Naive thymus-derived CD4-positive, alpha-beta T cell (primary cell): ENCODE measurements at regions of chr4 and their contacts with region 1.

Region 1: GRCh38 chr4:67624939-67625338 is 66.4 kb downstream of the STAP1 start:
- DNase-seq: peak in 2 of 9 donors; percentile 6 to 8
- ATAC-seq: no peak
- H3K4me3 ChIP-seq: no peak overlapping the region
- H3K4me3 Mint-ChIP-seq: no peak overlapping the region
- H3K27ac ChIP-seq: no peak overlapping the region
- H3K27ac Mint-ChIP-seq: no peak overlapping the region
- H3K4me1 ChIP-seq: no peaks in the 10 kb centered on the region
- H3K4me1 Mint-ChIP-seq: no peaks in the 10 kb centered on the region
- H3K27me3 ChIP-seq: no peaks in the 10 kb centered on the region
- H3K27me3 Mint-ChIP-seq: no peaks in the 10 kb centered on the region

Region 2: GRCh38 chr4:67575232-67575888 is 49.6 kb before region 1 on chr4:
- CTCF ChIA-PET with region 1: interaction called, 6 read pairs
- POLR2A ChIA-PET with region 1: interaction called, 3 read pairs
- intact Hi-C with region 1: loop called in 1 of 2 experiments (anchors 1 kb)
- DNase-seq: peak in 7 of 9 donors; percentile 29 to 63 (median 42)
- ATAC-seq: peak; percentile 86
- H3K4me3 ChIP-seq: peak overlapping the region; percentile 22
- H3K4me3 Mint-ChIP-seq: peak overlapping the region; percentile 58 to 82 (median 74)
- H3K27ac ChIP-seq: peak overlapping the region; percentile 70
- H3K27ac Mint-ChIP-seq: peak overlapping the region; percentile 79 to 95 (median 90)
- H3K4me1 ChIP-seq: peaks cover 0 to 33% of the 10 kb centered on the region in 2 donors
- H3K4me1 Mint-ChIP-seq: peaks cover 36 to 85% (median 68%) of the 10 kb centered on the region in 7 donors
- H3K27me3 ChIP-seq: no peaks in the 10 kb centered on the region
- H3K27me3 Mint-ChIP-seq: no peaks in the 10 kb centered on the region

Region 3: DNA sequence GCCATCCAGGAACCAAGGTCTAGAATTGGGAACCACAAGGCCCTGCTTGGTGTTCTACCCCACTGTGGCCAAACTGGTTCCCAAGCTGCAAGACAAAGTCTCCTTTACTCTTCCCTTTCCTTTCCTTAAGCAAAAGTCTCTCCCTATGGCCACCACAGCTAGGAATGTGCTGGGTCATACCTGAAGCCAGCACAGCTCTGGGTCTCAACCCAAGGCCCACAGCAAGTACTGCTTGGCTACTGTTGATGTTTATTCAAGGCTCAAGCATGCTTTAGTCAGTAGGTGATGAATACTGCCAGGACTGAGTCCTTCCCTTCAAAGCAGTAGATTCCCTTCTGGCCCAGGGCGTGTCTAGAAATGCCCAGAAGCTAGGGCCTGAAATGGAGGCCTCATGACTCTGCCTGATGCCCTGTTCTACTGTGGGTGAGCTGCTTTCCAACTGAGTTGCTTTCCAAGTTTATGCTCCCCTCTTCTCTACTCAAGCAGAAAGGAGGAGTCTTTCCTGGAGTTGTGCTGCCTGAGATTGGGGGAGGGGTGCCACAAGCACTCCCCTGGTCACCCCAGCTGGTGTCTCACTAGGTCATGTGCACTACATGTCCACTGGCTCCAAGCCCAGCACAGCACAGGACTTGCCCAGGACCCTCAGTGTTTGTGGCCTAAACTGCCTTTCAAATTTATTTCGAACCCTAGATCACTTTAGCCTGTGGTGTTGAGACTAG is 21.5 kb before region 1 on chr4:
- CTCF ChIA-PET with region 1: no interaction called
- POLR2A ChIA-PET with region 1: no interaction called
- intact Hi-C with region 1: loop called in 1 of 2 experiments (anchors 2 kb)
- DNase-seq: no peak
- ATAC-seq: no peak
- H3K4me3 ChIP-seq: no peak overlapping the region
- H3K4me3 Mint-ChIP-seq: no peak overlapping the region
- H3K27ac ChIP-seq: no peak overlapping the region
- H3K27ac Mint-ChIP-seq: peak overlapping the region in 1 of 9 donors; percentile 9
- H3K4me1 ChIP-seq: no peaks in the 10 kb centered on the region
- H3K4me1 Mint-ChIP-seq: peaks cover 0 to 6% (median 0%) of the 10 kb centered on the region in 7 donors
- H3K27me3 ChIP-seq: no peaks in the 10 kb centered on the region
- H3K27me3 Mint-ChIP-seq: no peaks in the 10 kb centered on the region

Region 4: GRCh38 chr4:67687636-67688035 is 62.7 kb after region 1 on chr4:
- CTCF ChIA-PET with region 1: no interaction called
- POLR2A ChIA-PET with region 1: no interaction called
- intact Hi-C with region 1: no loop called
- DNase-seq: no peak
- ATAC-seq: no peak
- H3K4me3 ChIP-seq: no peak overlapping the region
- H3K4me3 Mint-ChIP-seq: no peak overlapping the region
- H3K27ac ChIP-seq: no peak overlapping the region
- H3K27ac Mint-ChIP-seq: peak overlapping the region in 1 of 9 donors; percentile 19
- H3K4me1 ChIP-seq: no peaks in the 10 kb centered on the region
- H3K4me1 Mint-ChIP-seq: peaks cover 13 to 59% (median 48%) of the 10 kb centered on the region in 7 donors
- H3K27me3 ChIP-seq: no peaks in the 10 kb centered on the region
- H3K27me3 Mint-ChIP-seq: no peaks in the 10 kb centered on the region